A673 (cell line): ENCODE measurements at regions of chr2 and their contacts with region 1.

Region 1: GRCh38 chr2:230809677-230810251 is 55.0 kb upstream of the ITM2C start:
- DNase-seq: peak; percentile 11
- H3K4me3 ChIP-seq: no peak overlapping the region
- H3K27ac ChIP-seq: no peak overlapping the region
- H3K4me1 ChIP-seq: no peaks in the 10 kb centered on the region
- H3K27me3 ChIP-seq: no peaks in the 10 kb centered on the region
- CTCF ChIP-seq: peak; percentile 49; the same call in 1 of the 2 replicates

Region 2: DNA sequence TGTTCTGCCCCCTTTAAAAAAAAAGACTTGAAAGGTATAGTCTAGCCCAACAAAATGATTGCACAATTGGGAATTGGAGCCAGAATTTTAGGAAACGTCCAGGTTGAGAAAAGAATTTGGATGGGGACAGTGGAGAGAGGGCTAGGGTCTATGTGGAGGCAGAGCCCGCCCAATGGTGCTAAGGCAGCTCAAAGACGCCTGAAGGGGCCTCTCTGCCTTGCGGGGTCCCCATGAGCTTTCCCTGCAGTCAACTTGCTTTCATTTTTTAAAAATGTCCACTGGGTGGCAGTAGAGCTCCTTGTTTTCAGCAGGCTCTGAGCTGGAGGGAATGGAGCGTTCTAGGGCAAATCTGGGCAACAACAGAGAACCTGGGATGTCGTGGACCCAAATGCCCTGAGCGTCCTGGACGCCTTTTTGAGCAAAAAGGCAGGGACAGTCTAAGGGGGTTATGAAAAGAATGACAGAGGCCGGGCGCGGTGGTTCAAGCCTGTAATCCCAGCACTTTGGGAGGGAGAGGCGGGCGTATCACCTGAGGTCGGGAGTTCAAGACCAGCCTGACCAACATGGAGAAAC is 14.7 kb after region 1 on chr2:
- CTCF ChIA-PET with region 1: interaction called, 10 read pairs
- POLR2A ChIA-PET with region 1: no interaction called
- intact Hi-C with region 1: no loop called
- DNase-seq: peak; percentile 91
- H3K4me3 ChIP-seq: no peak overlapping the region
- H3K27ac ChIP-seq: no peak overlapping the region
- H3K4me1 ChIP-seq: no peaks in the 10 kb centered on the region
- H3K27me3 ChIP-seq: no peaks in the 10 kb centered on the region
- CTCF ChIP-seq: peak; percentile 74

Region 3: DNA sequence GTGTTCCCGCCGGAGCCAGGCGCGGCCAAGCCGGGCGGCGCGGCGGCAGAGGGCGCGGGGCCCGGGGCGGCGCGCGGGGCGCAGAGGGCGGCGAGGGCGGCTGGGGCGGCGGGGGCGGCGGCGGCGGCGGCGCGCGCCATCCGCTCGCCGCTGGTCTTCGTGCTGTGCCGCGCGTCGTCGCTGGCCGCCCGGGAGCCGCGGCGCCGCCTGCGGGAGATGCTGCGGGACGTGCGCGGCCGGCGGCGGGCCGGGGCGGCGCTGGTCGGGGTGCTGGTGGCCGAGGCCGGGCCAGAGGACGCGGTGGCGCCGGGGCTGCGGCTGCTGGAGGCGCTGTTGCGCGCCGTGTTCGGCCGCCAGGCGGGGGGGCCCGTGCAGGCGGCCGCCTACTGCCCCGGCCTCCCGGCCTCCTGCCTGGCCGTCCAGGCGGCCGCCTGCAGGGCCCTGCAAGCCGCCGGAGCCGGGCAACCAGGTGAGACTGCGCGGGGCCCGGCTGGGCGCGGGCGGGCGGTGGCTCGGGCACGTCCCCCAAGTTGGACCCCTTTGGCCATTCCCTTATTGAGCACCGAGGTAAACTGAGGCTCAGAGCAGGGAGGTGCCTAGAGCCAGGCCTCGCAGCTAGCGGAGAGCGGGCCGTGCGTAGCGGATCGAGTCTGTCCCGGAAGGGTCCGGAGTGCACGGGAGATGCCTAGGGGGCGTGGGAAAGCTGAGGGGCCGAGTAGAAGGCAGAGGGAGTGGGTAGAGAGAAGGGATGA is 228.1 kb after region 1 on chr2:
- CTCF ChIA-PET with region 1: interaction called, 10 read pairs
- POLR2A ChIA-PET with region 1: no interaction called
- intact Hi-C with region 1: no loop called
- DNase-seq: no peak
- H3K4me3 ChIP-seq: no peak overlapping the region
- H3K27ac ChIP-seq: no peak overlapping the region
- H3K4me1 ChIP-seq: no peaks in the 10 kb centered on the region
- H3K27me3 ChIP-seq: peaks cover 90% of the 10 kb centered on the region
- CTCF ChIP-seq: no peak

Region 4: GRCh38 chr2:232550354-232551249 is 1740.8 kb after region 1 on chr2 and contains the starts of genes EIF4E2 and TIGD1:
- CTCF ChIA-PET with region 1: no interaction called
- POLR2A ChIA-PET with region 1: no interaction called
- intact Hi-C with region 1: no loop called
- DNase-seq: peak; percentile 96
- H3K4me3 ChIP-seq: peak within 1 kb of the TSS; percentile 76
- H3K27ac ChIP-seq: peak within 1 kb of the TSS; percentile 96
- H3K4me1 ChIP-seq: peaks cover 8% of the 10 kb centered on the region
- H3K27me3 ChIP-seq: no peaks in the 10 kb centered on the region
- CTCF ChIP-seq: peak; percentile 46
- total RNA-seq, gene EIF4E2: 60.8 and 62.1 TPM in 2 replicates
- total RNA-seq, gene TIGD1: 9.0 and 9.8 TPM in 2 replicates